Cardiac septum (tissue), 1 donor: ENCODE measurements at regions of chr10 and their contacts with region 1.

Region 1: DNA sequence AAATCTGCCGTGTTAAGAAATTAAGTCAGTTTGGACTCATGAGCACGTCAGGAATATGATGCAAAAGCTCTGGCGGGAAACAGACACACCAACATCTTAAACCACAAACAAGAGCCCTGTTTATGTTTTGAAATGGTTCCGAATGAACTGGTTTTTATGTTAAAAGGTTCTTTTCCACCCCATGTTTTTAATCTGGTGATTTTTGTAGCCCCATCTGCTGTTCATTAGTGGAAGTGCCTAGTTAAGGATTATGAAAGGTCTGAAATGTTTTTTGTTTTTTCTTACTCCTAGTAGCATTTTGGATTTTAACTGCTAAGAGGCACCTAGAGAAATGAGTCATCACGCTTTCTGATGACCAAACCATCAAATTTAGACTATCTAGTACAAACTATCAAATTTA is 404.1 kb upstream of the MKI67 start:
- DNase-seq: no peak

Region 2: GRCh38 chr10:128263891-128264688 is 266.2 kb before region 1 on chr10:
- intact Hi-C with region 1: loop called (anchors 2 kb)
- DNase-seq: no peak

Region 3: DNA sequence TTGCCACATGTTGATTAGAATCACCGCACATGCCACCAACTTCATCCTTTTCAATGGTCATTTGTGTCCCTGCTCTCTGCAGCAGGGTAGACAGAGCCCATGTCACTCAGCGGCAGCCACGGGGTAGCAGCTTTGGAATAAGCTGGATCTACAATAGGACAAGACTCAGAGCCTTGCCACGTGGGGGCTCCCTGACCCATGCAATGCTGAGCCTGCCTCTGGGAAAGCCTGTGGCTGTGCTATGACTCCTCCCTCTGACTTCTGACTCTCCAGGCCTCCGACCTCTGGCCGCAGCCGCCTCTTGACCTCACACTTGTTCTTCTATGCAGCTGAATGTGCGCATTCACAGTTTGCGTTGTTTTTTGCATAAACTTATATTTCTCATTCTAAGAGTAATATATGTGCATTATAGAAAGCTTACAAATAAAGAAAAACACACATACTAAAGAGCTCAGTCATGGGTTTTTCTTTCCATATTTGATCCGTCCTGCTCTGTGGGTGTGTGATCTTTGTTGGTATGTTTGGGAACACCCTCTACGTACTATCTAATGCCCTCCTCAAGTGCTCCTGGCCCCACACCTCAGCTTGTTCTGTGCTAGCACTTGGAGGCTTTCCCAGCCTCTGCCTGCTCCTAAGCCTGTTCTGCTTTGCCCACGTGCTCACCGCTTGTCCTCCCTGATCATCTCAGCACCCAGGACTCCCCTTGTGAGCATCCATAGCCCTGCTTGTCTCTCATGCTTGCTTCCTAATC is 206.0 kb before region 1 on chr10:
- intact Hi-C with region 1: loop called (anchors 5 kb)
- DNase-seq: no peak

Region 4: GRCh38 chr10:128779416-128779815 is 249.1 kb after region 1 on chr10:
- intact Hi-C with region 1: no loop called
- DNase-seq: no peak

Region 5: DNA sequence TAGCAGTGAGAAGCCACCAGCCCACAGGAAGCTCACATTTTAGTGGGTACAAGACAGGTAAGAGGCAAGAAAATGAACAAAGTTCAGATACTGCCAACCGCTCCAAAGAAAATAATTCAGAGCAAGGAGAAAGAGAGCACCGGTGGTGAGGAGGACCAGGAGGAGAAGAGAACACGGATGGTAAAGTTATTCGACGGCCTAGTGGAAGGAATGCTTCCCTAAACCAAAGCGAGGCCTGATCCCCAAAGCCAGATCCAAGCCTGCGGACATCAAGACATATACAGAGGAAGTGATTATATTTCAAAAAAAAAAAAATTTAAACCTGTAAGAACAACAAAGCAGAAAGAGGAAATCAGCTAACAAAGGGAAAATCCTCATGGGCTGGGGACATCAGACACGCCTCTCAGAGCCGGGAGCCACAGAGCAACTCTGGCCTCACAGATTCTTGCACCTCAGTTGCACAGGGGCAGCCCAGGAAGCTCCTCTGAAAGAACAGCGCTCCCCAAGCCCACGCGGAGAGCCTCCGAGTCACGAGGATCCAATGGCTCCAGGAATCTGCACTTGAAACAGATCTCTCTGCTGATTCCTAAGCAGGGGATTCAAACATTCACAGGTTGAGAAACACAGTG is 723.4 kb after region 1 on chr10:
- intact Hi-C with region 1: no loop called
- DNase-seq: no peak